CD4-positive, alpha-beta T cell (primary cell): ENCODE measurements at regions of chr15 and their contacts with region 1.

Region 1: GRCh38 chr15:45279024-45279698 is 27.1 kb downstream of the SLC28A2 start:
- DNase-seq: peak; percentile 94 to 99 (median 96)
- ATAC-seq: peak; percentile 99
- H3K4me3 ChIP-seq: peak overlapping the region; percentile 60
- H3K4me3 Mint-ChIP-seq: peak overlapping the region; percentile 89
- H3K27ac ChIP-seq: peak overlapping the region; percentile 66 to 74
- H3K27ac Mint-ChIP-seq: peak overlapping the region; percentile 86
- H3K4me1 ChIP-seq: peaks cover 16% of the 10 kb centered on the region
- H3K4me1 Mint-ChIP-seq: peaks cover 19% of the 10 kb centered on the region
- H3K27me3 ChIP-seq: no peaks in the 10 kb centered on the region
- H3K27me3 Mint-ChIP-seq: peaks cover under 1% of the 10 kb centered on the region
- CTCF ChIP-seq: no peak

Region 2: GRCh38 chr15:45118131-45118588 is 161.0 kb before region 1 on chr15:
- CTCF ChIA-PET with region 1: interaction called, 10 read pairs
- POLR2A ChIA-PET with region 1: interaction called, 4 read pairs
- intact Hi-C with region 1: no loop called
- DNase-seq: peak; percentile 70 to 91 (median 80)
- ATAC-seq: peak; percentile 99
- H3K4me3 ChIP-seq: peak overlapping the region; percentile 29
- H3K4me3 Mint-ChIP-seq: peak overlapping the region; percentile 88
- H3K27ac ChIP-seq: no peak overlapping the region
- H3K27ac Mint-ChIP-seq: no peak overlapping the region
- H3K4me1 ChIP-seq: peaks cover 39% of the 10 kb centered on the region
- H3K4me1 Mint-ChIP-seq: peaks cover 43% of the 10 kb centered on the region
- H3K27me3 ChIP-seq: peaks cover 58 to 59% of the 10 kb centered on the region in 2 experiments
- H3K27me3 Mint-ChIP-seq: peaks cover 80% of the 10 kb centered on the region
- CTCF ChIP-seq: peak; percentile 100

Region 3: GRCh38 chr15:45126535-45127158 is 152.5 kb before region 1 on chr15:
- CTCF ChIA-PET with region 1: interaction called, 3 read pairs
- POLR2A ChIA-PET with region 1: interaction called, 3 read pairs
- intact Hi-C with region 1: loop called (anchors 1 to 2 kb)
- DNase-seq: peak in 10 of 14 experiments; percentile 26 to 71 (median 38)
- ATAC-seq: peak; percentile 69
- H3K4me3 ChIP-seq: no peak overlapping the region
- H3K4me3 Mint-ChIP-seq: no peak overlapping the region
- H3K27ac ChIP-seq: no peak overlapping the region
- H3K27ac Mint-ChIP-seq: no peak overlapping the region
- H3K4me1 ChIP-seq: peaks cover 14% of the 10 kb centered on the region
- H3K4me1 Mint-ChIP-seq: peaks cover 7% of the 10 kb centered on the region
- H3K27me3 ChIP-seq: peaks cover 47 to 60% of the 10 kb centered on the region in 2 experiments
- H3K27me3 Mint-ChIP-seq: peaks cover 72% of the 10 kb centered on the region
- CTCF ChIP-seq: peak; percentile 80

Region 4: DNA sequence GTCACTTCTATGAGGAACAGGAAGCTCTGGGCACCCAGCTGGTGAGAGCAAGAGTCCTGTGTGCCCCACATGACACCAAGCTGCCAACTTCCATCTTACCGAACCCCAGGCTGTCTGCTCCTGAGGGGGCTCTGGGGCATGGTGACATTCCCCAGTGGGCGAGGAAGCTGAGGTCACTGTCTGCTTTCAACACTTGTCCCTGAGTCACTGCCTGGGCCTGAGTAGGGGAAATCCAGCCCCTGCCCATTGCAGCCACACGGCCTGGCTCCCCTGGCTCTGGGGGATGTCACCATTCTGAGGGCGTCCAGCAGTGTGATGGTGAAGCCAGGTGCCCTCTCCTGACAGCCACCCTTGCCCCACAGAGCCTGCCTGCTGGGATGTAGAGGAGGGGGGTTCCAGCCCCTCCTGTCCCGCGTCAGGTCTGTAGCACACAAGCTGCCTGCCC is 168.9 kb after region 1 on chr15:
- CTCF ChIA-PET with region 1: no interaction called
- POLR2A ChIA-PET with region 1: no interaction called
- intact Hi-C with region 1: no loop called
- DNase-seq: peak in 2 of 14 experiments; percentile 70 to 78
- ATAC-seq: peak; percentile 32
- H3K4me3 ChIP-seq: no peak overlapping the region
- H3K4me3 Mint-ChIP-seq: no peak overlapping the region
- H3K27ac ChIP-seq: no peak overlapping the region
- H3K27ac Mint-ChIP-seq: no peak overlapping the region
- H3K4me1 ChIP-seq: no peaks in the 10 kb centered on the region
- H3K4me1 Mint-ChIP-seq: no peaks in the 10 kb centered on the region
- H3K27me3 ChIP-seq: no peaks in the 10 kb centered on the region
- H3K27me3 Mint-ChIP-seq: no peaks in the 10 kb centered on the region
- CTCF ChIP-seq: no peak

Region 5: GRCh38 chr15:45587095-45587860 is 308.1 kb after region 1 on chr15 and contains the start of gene BLOC1S6:
- CTCF ChIA-PET with region 1: no interaction called
- POLR2A ChIA-PET with region 1: interaction called, 5 read pairs
- intact Hi-C with region 1: loop called in 1 of 2 experiments (anchors 5 kb)
- DNase-seq: peak; percentile 78 to 95 (median 85)
- ATAC-seq: peak; percentile 78
- H3K4me3 ChIP-seq: peak within 1 kb of the TSS; percentile 94
- H3K4me3 Mint-ChIP-seq: peak within 1 kb of the TSS; percentile 99
- H3K27ac ChIP-seq: peak within 1 kb of the TSS; percentile 95 to 99
- H3K27ac Mint-ChIP-seq: peak within 1 kb of the TSS; percentile 100
- H3K4me1 ChIP-seq: peaks cover 21% of the 10 kb centered on the region
- H3K4me1 Mint-ChIP-seq: peaks cover 43% of the 10 kb centered on the region
- H3K27me3 ChIP-seq: no peaks in the 10 kb centered on the region
- H3K27me3 Mint-ChIP-seq: no peaks in the 10 kb centered on the region
- CTCF ChIP-seq: no peak
- total RNA-seq, gene BLOC1S6: 68.5 TPM